ENCODE measurements at regions of chr3 and their contacts with region 1.

Region 1: DNA sequence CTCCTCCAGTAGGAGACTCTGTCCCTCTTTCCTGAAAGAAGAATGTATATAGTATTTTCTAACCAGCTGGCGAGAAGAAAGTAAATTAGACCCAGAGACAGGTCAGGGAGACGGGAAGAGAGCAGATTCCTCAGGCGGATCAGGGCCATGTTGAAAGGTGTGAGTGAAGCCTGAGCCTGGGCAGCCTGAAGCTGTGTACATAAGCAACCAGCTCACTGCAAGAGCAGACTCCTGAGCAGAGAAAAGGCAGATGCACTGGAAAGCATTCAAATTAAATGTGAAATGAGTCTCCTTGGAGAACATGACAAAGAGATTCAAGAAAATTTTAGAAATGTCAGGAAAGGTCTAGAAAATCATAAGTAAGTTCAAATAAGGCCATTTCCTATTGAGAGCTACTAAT is 165.8 kb downstream of the GOLIM4 start:
- DNase-seq: no peak
- H3K4me3 Mint-ChIP-seq: no peak overlapping the region
- H3K27ac Mint-ChIP-seq: no peak overlapping the region
- H3K4me1 Mint-ChIP-seq: no peaks in the 10 kb centered on the region
- H3K27me3 Mint-ChIP-seq: no peaks in the 10 kb centered on the region

Region 2: DNA sequence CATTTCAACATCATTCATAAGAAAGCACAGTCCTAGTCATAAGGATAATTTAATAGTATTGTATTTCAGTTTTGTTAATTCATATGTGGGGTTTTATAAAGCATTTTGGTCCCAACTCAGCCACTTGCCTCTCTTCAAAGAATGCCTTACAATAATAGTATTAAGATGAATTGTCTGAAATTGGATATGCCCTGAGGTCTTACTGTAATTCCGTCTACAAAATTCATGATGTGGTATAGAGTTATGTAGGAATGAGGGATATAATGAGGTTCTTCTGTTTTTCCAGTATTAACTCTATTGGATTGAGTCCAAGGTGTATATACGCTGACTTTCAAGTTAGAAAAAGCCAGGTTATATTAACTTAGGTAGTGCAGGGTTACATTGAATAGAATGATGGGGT is 11.3 kb before region 1 on chr3:
- intact Hi-C with region 1: no loop called
- DNase-seq: no peak
- H3K4me3 Mint-ChIP-seq: no peak overlapping the region
- H3K27ac Mint-ChIP-seq: no peak overlapping the region
- H3K4me1 Mint-ChIP-seq: no peaks in the 10 kb centered on the region
- H3K27me3 Mint-ChIP-seq: peaks cover 5% of the 10 kb centered on the region

Region 3: DNA sequence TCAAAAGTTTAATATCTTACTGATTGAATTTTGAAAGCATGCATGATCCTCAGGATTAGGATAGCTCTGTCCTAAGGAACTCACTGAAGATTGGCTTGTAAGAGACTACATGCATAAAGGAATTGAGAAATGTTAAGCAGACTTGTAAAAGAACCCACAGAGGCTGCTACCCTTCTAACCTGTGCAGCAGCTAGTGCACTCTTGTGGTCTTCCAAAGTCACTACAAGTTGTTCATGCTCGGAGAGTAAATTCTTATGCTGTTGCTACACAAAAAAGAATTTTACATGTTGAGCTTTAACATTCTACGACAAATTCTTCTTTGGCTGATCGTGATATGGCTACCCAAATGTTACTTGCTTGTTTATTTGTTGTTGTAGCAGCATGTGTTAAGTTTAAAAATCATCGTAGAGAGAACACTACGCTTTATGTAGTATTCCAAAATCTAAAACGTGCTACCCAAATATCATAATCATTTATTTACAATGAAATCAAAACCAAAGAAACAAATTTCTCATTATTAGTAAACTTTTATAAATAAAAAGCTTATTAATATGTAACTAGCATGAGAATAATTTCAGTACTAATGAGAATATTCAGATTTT is 110.7 kb after region 1 on chr3:
- intact Hi-C with region 1: loop called (anchors 1 kb)
- DNase-seq: no peak
- H3K4me3 Mint-ChIP-seq: no peak overlapping the region
- H3K27ac Mint-ChIP-seq: no peak overlapping the region
- H3K4me1 Mint-ChIP-seq: no peaks in the 10 kb centered on the region
- H3K27me3 Mint-ChIP-seq: no peaks in the 10 kb centered on the region

Region 4: GRCh38 chr3:168165390-168166269 is 235.7 kb after region 1 on chr3:
- intact Hi-C with region 1: loop called (anchors 10 kb)
- DNase-seq: no peak
- H3K4me3 Mint-ChIP-seq: no peak overlapping the region
- H3K27ac Mint-ChIP-seq: no peak overlapping the region
- H3K4me1 Mint-ChIP-seq: peaks cover 1% of the 10 kb centered on the region
- H3K27me3 Mint-ChIP-seq: peaks cover 2% of the 10 kb centered on the region

Measured in activated T-helper 2 cell treated with anti-CD3 and anti-CD28 coated beads, Interferon-gamma antibody, Interleukin-2, Interleukin-4, amounts not matched to agents 10 μg/mL and 5 μg/mL and 100 μg/mL, durations not matched to agents 14 hours and 24 hours and 36 hours (primary cell).